Prostate gland (tissue), 2 donors: ENCODE measurements at regions of chr15 and their contacts with region 1.

Region 1: DNA sequence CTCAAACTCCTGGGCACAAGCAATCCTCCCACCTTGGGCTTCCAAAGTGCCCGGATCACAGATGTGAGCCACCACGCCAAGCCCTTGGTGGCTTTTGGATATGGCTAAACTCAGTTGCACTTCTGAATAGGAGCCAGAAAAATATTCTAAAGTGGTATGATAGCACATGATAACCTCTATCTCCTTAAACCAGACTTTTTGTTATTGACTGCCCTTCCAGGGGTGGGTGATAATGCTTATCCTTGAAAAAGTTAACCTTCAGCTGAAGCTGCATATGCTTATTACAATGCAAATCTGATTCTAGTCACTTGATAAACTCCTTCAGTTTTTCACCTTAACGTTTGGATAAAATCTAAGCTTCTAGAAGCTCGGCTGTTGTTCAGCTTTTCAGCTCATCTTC is 6.3 kb downstream of the CCNB2 start:
- DNase-seq: no peak
- H3K4me3 ChIP-seq: no peak overlapping the region
- H3K27ac ChIP-seq: no peak overlapping the region
- H3K4me1 ChIP-seq: no peaks in the 10 kb centered on the region
- H3K27me3 ChIP-seq: no peaks in the 10 kb centered on the region
- CTCF ChIP-seq: no peak
- POLR2A ChIP-seq: no peak

Region 2: DNA sequence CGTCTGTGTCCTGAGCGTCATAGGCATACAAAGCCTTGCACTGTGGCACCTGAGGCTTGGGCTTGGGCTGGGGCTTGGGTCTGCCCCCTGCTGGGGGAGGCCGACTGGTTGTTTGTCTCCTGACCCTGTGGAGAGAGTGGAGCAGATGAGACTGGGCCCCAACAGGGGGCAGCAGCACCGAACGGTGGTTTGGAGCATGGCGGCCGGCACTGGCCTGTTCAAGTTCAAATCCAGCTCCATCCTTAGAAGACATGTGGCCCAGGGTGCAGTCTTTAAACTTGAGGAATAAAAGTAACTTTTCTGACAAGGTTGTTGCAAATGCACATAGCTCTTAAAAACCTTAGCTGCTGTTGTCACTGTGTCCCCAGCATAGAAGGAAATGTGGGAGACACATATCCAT is 27.0 kb after region 1 on chr15:
- intact Hi-C with region 1: loop called (anchors 2 kb)
- DNase-seq: peak; percentile 41
- H3K4me3 ChIP-seq: no peak overlapping the region
- H3K27ac ChIP-seq: no peak overlapping the region
- H3K4me1 ChIP-seq: no peaks in the 10 kb centered on the region
- H3K27me3 ChIP-seq: no peaks in the 10 kb centered on the region
- CTCF ChIP-seq: peak in 3 of 4 experiments; percentile 51 to 58 (median 52)
- POLR2A ChIP-seq: no peak